Kidney (tissue), 22 donors: ENCODE measurements at regions of chr17 and their contacts with region 1.

Region 1: GRCh38 chr17:81511804-81512559 is 617 bp downstream of the ACTG1 start:
- DNase-seq: peak in 2 of 5 donors; percentile 2 to 85
- H3K4me3 ChIP-seq: peak overlapping the region; percentile 84 to 96 (median 94)
- H3K27ac ChIP-seq: peak overlapping the region; percentile 88 to 90
- H3K4me1 ChIP-seq: peaks cover 3 to 27% (median 3%) of the 10 kb centered on the region in 3 donors
- H3K27me3 ChIP-seq: no peaks in the 10 kb centered on the region
- CTCF ChIP-seq: no peak

Region 2: GRCh38 chr17:81397314-81398175 is 114.4 kb before region 1 on chr17:
- intact Hi-C with region 1: loop called (anchors 2 kb)
- DNase-seq: peak in 3 of 5 donors; percentile 68 to 82 (median 77)
- H3K4me3 ChIP-seq: peak overlapping the region; percentile 68 to 83 (median 72)
- H3K27ac ChIP-seq: peak overlapping the region; percentile 88 to 93
- H3K4me1 ChIP-seq: peaks cover 4 to 25% (median 22%) of the 10 kb centered on the region in 3 donors
- H3K27me3 ChIP-seq: no peaks in the 10 kb centered on the region
- CTCF ChIP-seq: no peak